Heart right ventricle (tissue), 16 donors: ENCODE measurements at regions of chr11 and their contacts with region 1.

Region 1: DNA sequence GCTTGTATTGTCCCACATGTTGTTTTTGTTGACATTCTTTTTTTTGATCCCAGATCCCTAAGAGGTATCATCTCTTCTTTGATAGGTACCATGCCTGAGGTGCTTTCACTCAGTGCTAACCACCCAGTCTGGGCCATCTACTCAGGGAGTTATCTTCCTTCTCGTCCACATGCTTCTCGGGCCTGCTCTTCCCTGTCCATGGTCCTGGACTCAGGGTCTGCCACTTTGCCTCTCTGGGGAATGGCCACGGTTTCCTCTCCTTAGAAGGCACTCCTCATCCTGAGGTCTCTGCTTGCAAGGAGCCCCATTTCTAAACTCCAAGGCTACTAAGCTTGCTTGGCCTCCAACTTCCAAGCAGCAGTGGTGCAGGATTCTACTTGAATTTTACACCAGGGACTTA is 227.0 kb upstream of the NCAM1 start:
- DNase-seq: peak in 1 of 2 donors; percentile 27
- ATAC-seq: peak in 3 of 8 donors; percentile 65 to 69 (median 68)
- H3K4me3 ChIP-seq: no peak overlapping the region
- H3K27ac ChIP-seq: no peak overlapping the region
- H3K4me1 ChIP-seq: no peaks in the 10 kb centered on the region
- H3K27me3 ChIP-seq: no peaks in the 10 kb centered on the region
- CTCF ChIP-seq: no peak

Region 2: DNA sequence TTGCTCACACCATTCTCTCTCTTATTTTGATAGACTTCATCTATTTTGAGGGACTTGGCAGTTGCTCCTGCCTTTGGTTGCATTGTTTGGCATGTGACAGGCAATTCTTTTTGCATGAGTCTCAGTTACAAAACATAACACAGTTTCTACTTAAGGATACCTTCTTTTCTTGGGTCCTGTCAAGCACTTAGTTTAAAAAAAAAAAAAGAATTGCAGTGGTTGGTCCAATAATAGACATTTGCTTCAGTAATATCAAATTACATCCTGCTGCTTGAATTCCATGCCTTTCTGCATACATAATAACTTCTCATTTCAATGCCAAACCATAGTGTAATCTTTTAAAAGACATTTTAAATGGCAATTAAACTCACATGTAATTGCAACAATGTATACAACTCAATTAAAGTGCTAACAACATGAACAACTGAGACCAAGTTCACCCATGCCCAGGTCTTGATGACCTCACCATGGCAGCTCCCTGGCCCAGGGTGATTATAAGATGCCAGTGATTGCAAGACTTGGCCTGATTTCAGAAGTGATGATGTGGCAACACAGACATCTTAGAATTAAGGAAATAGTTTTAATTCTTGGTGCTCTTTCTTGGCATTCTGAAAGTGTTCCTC is 441.3 kb before region 1 on chr11:
- intact Hi-C with region 1: no loop called
- DNase-seq: no peak
- ATAC-seq: peak in 3 of 8 donors; percentile 18 to 54 (median 41)
- H3K4me3 ChIP-seq: no peak overlapping the region
- H3K27ac ChIP-seq: peak overlapping the region; percentile 34 to 88 (median 78)
- H3K4me1 ChIP-seq: peaks cover 0 to 50% (median 19%) of the 10 kb centered on the region in 9 donors
- H3K27me3 ChIP-seq: no peaks in the 10 kb centered on the region
- CTCF ChIP-seq: no peak

Region 3: GRCh38 chr11:112605093-112605666 is 129.0 kb before region 1 on chr11:
- intact Hi-C with region 1: loop called in 1 of 10 experiments (anchors 10 kb)
- DNase-seq: no peak
- ATAC-seq: no peak
- H3K4me3 ChIP-seq: no peak overlapping the region
- H3K27ac ChIP-seq: no peak overlapping the region
- H3K4me1 ChIP-seq: peaks cover 0 to 10% (median 0%) of the 10 kb centered on the region in 9 donors
- H3K27me3 ChIP-seq: no peaks in the 10 kb centered on the region
- CTCF ChIP-seq: no peak

Region 4: GRCh38 chr11:112795142-112795815 is 61.1 kb after region 1 on chr11:
- intact Hi-C with region 1: loop called in 1 of 10 experiments (anchors 10 kb)
- DNase-seq: no peak
- ATAC-seq: peak in 5 of 8 donors; percentile 8 to 72 (median 41)
- H3K4me3 ChIP-seq: no peak overlapping the region
- H3K27ac ChIP-seq: peak overlapping the region in 2 of 10 donors; percentile 62
- H3K4me1 ChIP-seq: peaks cover 0 to 41% (median 12%) of the 10 kb centered on the region in 9 donors
- H3K27me3 ChIP-seq: no peaks in the 10 kb centered on the region
- CTCF ChIP-seq: peak; percentile 11 to 61 (median 51)